ENCODE measurements at regions of chr9 and their contacts with region 1.

Region 1: DNA sequence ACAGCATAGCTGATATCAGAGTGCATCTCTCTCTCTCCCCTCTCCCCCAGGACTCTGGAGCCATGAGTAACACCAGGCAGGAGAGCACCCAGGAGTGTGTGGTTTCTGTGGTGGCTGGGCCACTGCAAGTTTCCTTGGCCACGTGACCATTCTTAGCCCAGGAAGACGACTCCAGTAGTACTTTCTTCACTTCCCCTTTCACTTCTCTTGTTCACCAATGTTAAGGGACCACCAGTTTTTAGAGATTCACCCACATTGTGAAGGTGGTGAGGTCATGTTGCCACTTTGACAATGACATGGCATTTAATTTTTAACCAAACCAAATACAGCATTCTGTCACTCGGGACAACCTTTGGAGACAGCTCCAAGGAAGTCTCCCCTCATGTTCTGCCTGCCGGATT is 17.9 kb upstream of the DAPK1 start:
- DNase-seq: no peak
- H3K4me3 ChIP-seq: no peak overlapping the region
- H3K27ac ChIP-seq: peak overlapping the region; percentile 68
- H3K4me1 ChIP-seq: peaks cover 51% of the 10 kb centered on the region
- H3K27me3 ChIP-seq: no peaks in the 10 kb centered on the region
- CTCF ChIP-seq: no peak

Region 2: DNA sequence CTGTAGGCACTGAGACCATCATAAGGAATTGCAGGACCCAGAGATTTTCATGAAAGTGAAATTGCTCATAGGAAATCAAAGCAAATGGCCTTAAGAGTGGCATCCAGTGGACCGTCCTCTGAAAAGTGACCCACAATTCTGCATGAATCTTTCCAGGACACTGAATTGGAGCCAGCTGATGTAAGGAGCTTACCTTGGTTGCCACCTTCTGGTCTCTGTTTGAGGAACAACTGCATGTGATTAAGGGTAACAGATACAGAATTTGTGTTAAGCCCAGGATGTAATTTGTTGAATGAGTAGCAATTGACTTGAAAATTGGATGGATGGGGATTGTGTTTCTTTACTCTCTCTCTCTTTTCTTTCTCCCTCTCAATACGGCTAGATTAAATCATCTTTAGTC is 482.6 kb before region 1 on chr9:
- CTCF ChIA-PET with region 1: no interaction called
- POLR2A ChIA-PET with region 1: interaction called, 18 read pairs
- intact Hi-C with region 1: no loop called
- DNase-seq: no peak
- H3K4me3 ChIP-seq: no peak overlapping the region
- H3K27ac ChIP-seq: no peak overlapping the region
- H3K4me1 ChIP-seq: peaks cover 14% of the 10 kb centered on the region
- H3K27me3 ChIP-seq: no peaks in the 10 kb centered on the region
- CTCF ChIP-seq: no peak

Region 3: DNA sequence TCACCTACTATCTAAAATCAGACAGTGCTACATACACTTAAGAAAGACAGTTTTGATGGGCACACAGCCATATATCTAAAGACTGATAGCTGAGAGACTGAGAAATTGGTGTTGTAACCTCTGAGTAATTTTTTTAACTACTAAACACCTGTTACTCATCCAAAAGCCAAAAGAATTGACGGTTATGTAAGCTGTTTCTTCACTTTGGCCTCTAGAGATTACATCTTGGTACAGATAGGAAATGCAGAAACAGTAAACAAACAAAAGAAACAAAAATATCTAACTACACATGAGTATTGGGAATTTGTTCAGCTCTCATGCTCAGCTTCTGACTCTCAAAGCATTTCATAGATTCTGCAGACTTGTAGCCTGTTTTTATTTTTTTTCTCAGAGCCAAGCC is 380.4 kb before region 1 on chr9:
- CTCF ChIA-PET with region 1: no interaction called
- POLR2A ChIA-PET with region 1: no interaction called
- intact Hi-C with region 1: no loop called
- DNase-seq: no peak
- H3K4me3 ChIP-seq: no peak overlapping the region
- H3K27ac ChIP-seq: no peak overlapping the region
- H3K4me1 ChIP-seq: peaks cover 5% of the 10 kb centered on the region
- H3K27me3 ChIP-seq: no peaks in the 10 kb centered on the region
- CTCF ChIP-seq: no peak

Region 4: DNA sequence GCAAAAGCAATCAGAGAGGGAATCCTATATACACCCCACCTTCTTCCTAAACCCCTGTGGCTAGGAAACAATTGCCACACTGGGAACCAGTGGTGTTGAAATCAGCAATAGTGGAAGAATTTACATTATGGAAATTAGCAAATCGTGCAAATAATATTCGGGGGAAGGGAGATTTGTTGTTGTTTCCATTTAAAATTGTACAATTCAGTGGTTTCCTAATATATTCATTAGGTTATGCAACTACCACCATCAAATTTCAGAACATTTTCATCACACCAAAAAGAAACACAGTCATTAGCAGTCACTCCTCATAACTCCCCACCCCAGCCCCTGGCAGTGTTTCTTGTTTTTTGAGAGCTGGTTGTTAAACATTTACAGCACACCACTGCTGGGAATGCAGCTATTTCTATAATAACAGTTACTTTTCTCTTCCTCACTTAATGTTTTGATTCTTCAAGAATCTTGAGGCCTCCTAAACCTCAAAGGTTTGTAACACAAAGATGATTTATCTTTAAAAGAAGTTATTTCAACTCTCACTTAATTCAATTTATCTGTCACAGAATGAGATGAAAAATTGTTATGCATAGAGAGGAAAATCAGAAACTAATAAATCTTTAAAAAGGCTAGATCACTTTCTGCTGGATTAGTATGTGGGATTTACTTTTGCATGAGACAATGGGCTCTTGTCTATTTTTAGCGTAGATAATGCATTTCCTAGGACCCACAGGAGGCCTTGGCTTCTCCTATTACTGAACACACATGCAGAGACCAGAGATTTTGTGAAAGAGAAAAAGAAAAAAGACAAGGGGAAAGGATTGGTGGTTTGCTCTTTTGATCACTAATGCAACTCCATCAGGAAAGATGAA is 73.9 kb before region 1 on chr9:
- CTCF ChIA-PET with region 1: no interaction called
- POLR2A ChIA-PET with region 1: no interaction called
- intact Hi-C with region 1: loop called (anchors 2 kb)
- DNase-seq: peak; percentile 90
- H3K4me3 ChIP-seq: no peak overlapping the region
- H3K27ac ChIP-seq: peak overlapping the region; percentile 93
- H3K4me1 ChIP-seq: peaks cover 52% of the 10 kb centered on the region
- H3K27me3 ChIP-seq: no peaks in the 10 kb centered on the region
- CTCF ChIP-seq: no peak

Region 5: DNA sequence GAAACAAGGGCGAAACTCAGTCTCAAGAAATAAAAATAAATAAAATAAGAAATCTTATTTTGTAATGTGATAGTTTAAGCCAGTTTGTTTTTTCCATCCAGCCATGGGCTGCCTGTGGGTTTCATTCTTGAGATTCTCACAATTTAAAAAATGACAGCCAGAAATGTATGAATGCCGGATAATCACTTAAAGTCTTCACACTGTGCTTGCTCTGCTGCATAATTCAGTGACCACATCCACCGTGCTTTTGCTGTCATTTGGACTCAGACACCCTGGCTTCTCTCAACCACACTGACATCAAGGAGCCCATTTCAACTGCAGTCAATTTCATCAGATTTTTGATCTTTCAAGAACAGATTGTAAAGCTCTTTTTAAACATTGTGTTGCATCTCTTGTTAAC is 43.1 kb before region 1 on chr9:
- CTCF ChIA-PET with region 1: interaction called, 6 read pairs
- POLR2A ChIA-PET with region 1: no interaction called
- intact Hi-C with region 1: loop called (anchors 5 kb)
- DNase-seq: peak; percentile 35
- H3K4me3 ChIP-seq: no peak overlapping the region
- H3K27ac ChIP-seq: no peak overlapping the region
- H3K4me1 ChIP-seq: peaks cover 45% of the 10 kb centered on the region
- H3K27me3 ChIP-seq: no peaks in the 10 kb centered on the region
- CTCF ChIP-seq: no peak

Region 6: DNA sequence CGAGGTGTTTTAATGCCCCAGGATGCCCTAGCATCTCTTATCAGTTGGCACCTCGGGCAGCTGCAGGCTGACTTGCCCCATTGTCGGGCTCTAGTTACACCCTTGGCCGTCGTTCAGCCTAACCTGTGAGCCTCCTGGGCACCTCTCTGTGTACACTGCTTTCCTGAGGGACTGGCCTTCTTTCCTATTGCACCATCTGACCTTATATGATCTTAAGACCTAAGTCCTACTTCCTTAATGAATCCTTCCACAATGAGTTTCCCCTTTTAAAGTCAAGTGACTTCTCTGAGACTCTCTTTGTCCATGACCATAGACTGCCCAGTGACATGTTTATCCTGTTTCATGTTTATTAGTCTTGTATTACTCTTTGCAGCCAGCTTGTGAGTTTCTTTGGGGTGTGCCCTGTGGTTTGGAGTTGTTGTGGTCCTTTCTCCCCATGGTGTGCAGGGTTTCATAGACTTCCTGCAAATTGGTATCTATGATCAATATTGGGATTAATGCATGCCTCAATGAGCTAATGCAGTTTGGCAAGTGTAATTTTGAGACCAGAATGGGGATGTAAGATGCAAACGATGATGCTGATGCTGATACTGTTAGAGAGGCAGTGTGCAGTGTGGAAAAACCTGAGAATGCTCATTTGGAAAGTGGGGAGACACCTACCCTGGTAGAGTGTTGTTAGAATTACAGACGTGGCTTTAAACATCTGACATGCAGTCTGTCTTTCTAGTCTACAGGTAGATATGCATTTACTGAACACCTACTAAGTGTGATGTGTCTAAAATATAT is 22.8 kb after region 1 on chr9:
- CTCF ChIA-PET with region 1: interaction called, 4 read pairs
- POLR2A ChIA-PET with region 1: interaction called, 20 read pairs
- intact Hi-C with region 1: no loop called
- DNase-seq: no peak
- H3K4me3 ChIP-seq: peak overlapping the region; percentile 91
- H3K27ac ChIP-seq: peak overlapping the region; percentile 53
- H3K4me1 ChIP-seq: peaks cover 35% of the 10 kb centered on the region
- H3K27me3 ChIP-seq: no peaks in the 10 kb centered on the region
- CTCF ChIP-seq: no peak

Region 7: DNA sequence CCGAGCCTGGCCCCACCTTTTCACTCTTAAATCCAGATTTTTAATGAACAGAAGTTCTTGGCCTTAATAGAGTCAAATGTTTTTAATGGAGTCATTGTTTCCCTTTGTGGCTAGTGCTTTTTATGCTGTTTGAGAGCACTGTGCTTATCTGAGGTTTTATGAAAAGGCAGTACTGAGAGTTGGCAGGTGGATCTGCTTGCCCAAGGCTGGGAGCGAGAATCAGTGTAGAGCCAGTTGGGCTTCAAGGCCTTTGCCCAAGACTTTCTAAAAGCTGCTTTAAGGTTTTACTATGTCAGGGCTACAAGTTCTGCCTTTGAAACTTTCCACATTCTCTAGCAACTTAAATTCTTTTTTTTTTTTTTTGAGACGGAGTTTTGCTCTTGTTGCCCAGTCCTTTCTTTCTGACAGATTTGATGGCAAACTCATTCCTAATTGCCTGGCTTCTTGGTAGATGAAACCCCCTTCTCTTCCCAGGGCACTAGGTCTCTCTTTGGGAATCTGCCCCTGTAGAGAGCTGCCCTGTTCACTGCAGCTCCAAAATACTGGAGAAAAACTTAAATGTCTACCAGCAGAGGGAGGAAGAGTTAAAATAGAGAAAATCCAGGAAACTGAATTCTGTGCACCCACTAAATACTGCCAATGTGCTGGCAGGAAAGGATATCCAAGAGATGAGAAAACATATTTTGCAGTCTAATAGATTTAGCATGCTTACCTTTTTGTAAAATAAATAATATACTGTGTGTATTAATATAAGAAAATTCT is 531.4 kb after region 1 on chr9:
- CTCF ChIA-PET with region 1: no interaction called
- POLR2A ChIA-PET with region 1: no interaction called
- intact Hi-C with region 1: no loop called
- DNase-seq: peak; percentile 49
- H3K4me3 ChIP-seq: no peak overlapping the region
- H3K27ac ChIP-seq: no peak overlapping the region
- H3K4me1 ChIP-seq: peaks cover 5% of the 10 kb centered on the region
- H3K27me3 ChIP-seq: no peaks in the 10 kb centered on the region
- CTCF ChIP-seq: peak; percentile 44

Region 8: GRCh38 chr9:88197781-88198340 is 718.1 kb after region 1 on chr9:
- CTCF ChIA-PET with region 1: no interaction called
- POLR2A ChIA-PET with region 1: no interaction called
- intact Hi-C with region 1: loop called (anchors 5 kb)
- DNase-seq: peak; percentile 90
- H3K4me3 ChIP-seq: peak overlapping the region; percentile 15
- H3K27ac ChIP-seq: peak overlapping the region; percentile 97
- H3K4me1 ChIP-seq: peaks cover 53% of the 10 kb centered on the region
- H3K27me3 ChIP-seq: no peaks in the 10 kb centered on the region
- CTCF ChIP-seq: no peak